ENCODE measurements at regions of chr20 and their contacts with region 1.

Region 1: DNA sequence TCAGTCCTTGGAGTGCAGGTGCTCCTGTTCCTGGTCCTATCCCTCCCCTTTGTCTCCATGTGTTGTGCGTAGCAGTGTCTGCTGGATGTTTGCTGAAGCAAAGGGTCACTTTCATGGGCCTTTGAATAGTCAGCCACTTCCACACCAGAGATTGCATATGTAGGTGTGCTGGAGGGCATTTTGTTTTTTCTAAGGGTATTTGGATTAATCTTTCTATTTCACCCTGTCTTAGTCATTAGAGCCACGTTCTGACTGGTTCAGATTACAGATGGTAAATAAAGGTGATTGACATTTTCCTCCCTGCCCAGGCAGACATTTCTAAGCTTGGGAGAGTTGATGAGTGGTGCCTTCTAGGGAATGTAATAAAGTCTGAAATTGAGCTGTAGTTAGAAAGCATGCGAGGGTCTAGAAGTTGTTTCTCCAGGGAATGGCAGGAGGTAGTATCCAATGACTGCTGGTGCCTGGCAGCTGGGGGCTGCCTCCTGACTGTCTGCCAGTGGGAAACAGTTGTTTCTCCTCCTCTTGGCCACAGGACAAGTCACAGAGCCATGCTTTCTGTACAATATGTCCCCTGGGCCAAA is 14.5 kb downstream of the EDN3 start:
- DNase-seq: no peak
- H3K4me3 ChIP-seq: no peak overlapping the region
- CTCF ChIP-seq: no peak
- POLR2A ChIP-seq: no peak

Region 2: GRCh38 chr20:59371431-59371830 is 56.5 kb after region 1 on chr20:
- intact Hi-C with region 1: loop called (anchors 10 kb)
- DNase-seq: no peak
- H3K4me3 ChIP-seq: no peak overlapping the region
- CTCF ChIP-seq: no peak
- POLR2A ChIP-seq: no peak

Measured in lower leg skin (tissue), 4 donors.